ENCODE measurements at regions of chr22 and their contacts with region 1.

Region 1: GRCh38 chr22:35575116-35575748 is 34.6 kb downstream of the RASD2 start:
- DNase-seq: no peak
- ATAC-seq: no peak
- H3K4me3 ChIP-seq: no peak overlapping the region
- H3K27ac ChIP-seq: no peak overlapping the region
- H3K4me1 ChIP-seq: peaks cover 7% of the 10 kb centered on the region
- H3K27me3 ChIP-seq: no peaks in the 10 kb centered on the region
- CTCF ChIP-seq: no peak
- POLR2A ChIP-seq: no peak

Region 2: GRCh38 chr22:35425971-35426800 is 149.0 kb before region 1 on chr22:
- intact Hi-C with region 1: loop called (anchors 5 kb)
- DNase-seq: no peak
- ATAC-seq: no peak
- H3K4me3 ChIP-seq: no peak overlapping the region
- H3K27ac ChIP-seq: no peak overlapping the region
- H3K4me1 ChIP-seq: peaks cover 9% of the 10 kb centered on the region
- H3K27me3 ChIP-seq: no peaks in the 10 kb centered on the region
- CTCF ChIP-seq: no peak
- POLR2A ChIP-seq: no peak

Region 3: DNA sequence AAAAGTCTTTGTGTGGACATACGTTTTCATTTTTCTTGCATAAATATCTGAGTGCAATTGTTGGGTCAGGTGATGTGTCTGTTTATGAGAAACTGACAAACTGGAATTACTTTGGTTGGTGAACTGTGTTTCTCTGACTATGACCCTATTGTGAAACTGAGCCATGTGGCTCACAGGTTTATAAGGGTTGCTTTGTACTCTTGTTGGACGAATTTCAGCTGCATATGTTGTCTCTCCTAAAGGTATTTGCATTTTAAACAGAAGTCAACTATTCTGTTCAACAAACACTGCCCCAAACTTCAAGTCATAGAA is 69.0 kb before region 1 on chr22:
- intact Hi-C with region 1: no loop called
- DNase-seq: no peak
- ATAC-seq: no peak
- H3K4me3 ChIP-seq: no peak overlapping the region
- H3K27ac ChIP-seq: no peak overlapping the region
- H3K4me1 ChIP-seq: no peaks in the 10 kb centered on the region
- H3K27me3 ChIP-seq: no peaks in the 10 kb centered on the region
- CTCF ChIP-seq: no peak
- POLR2A ChIP-seq: no peak

Measured in body of pancreas (tissue), 4 donors.